Right cardiac atrium (tissue), 5 donors: ENCODE measurements at regions of chr15 and their contacts with region 1.

Region 1: GRCh38 chr15:49046220-49047102 is at the start of gene SECISBP2L:
- DNase-seq: peak; percentile 94 to 97 (median 97)
- ATAC-seq: peak; percentile 99
- H3K4me3 ChIP-seq: peak within 1 kb of the TSS; percentile 77
- H3K27ac ChIP-seq: peak within 1 kb of the TSS; percentile 61
- H3K4me1 ChIP-seq: peaks cover 2% of the 10 kb centered on the region
- H3K27me3 ChIP-seq: no peaks in the 10 kb centered on the region
- total RNA-seq, gene SECISBP2L: 31.7 to 36.9 (median 34.4) TPM

Region 2: DNA sequence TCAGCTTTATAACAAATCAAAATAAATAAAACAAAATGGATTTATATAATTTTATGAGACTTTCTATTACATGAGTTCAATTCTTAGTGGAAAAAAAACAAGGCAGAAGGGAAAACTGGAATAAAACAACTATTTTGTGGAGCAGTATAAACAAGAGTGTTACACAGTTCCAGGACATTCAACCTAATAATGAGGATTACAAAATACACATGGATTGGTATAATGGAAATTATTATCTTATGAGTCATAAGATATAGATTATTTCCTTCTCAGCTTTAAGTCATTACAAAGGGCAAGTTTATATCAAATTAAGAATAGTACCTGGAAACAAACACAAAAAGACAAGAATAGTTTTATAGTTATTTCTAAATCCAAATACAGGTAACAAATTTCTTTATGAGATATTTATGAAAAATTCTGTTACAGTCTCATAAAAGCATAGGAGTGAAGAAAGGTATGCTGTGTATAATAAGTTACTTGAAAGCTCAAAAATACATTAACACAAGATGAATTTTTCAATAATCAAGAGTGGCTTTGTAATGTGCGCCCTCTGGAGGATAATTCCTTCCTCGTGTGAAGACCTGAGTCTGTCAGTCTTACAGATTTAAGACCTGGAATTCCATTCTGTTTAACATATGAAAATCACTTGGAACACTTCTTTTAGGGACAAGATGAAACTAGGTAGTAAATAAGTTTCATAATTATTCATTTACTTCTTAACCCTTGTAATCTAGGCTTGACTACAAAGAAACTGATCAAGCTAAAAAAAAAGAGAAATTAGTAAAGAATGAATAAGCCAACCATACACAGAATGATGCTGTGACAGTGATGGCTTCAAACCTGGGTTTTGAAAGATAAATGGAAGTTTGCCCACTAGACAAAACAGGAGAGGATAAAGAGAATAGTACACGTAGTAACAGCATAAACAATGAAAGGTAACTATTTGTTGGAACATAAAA is 99.5 kb after region 1 on chr15:
- intact Hi-C with region 1: loop called in 2 of 4 experiments (anchors 10 kb)
- DNase-seq: no peak
- ATAC-seq: no peak
- H3K4me3 ChIP-seq: no peak overlapping the region
- H3K27ac ChIP-seq: no peak overlapping the region
- H3K4me1 ChIP-seq: peaks cover 3% of the 10 kb centered on the region
- H3K27me3 ChIP-seq: no peaks in the 10 kb centered on the region

Region 3: DNA sequence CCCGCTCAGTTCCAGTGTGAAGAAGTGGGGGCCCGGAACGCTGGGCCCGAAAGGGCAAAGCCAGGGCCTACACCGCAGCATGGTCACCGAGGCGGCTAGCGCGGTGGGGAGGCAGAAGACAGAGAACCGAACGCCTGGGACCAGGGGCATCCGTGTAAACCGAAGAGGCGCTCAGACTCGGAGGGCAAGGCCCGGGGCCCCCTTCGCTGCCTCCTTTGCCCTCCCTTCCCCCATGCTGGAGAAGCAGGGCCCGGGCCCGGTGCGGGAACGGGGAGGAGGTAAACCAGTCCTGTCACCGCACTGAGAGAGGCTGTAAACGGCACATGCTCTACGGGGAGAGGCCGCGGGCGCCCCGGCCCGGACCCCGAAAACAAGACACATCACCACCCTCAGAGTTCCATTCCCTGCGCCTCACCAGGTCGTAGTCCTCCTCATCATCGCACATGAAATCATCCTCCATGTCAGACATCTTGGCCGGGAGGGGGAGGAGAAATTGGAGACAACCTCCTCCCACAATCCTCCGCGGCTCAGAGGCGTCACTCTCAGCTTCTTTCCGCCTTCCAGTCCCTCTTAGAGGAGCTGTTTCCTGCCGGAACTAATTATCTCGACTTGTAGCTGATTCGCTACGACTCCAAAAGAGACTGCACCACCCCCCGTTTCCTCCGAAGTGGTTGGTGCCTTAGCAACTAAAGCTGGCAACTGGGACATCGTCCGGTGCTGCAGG is 108.8 kb after region 1 on chr15 and contains the start of gene COPS2:
- intact Hi-C with region 1: loop called in 1 of 4 experiments (anchors 10 kb)
- DNase-seq: peak; percentile 90 to 95 (median 94)
- ATAC-seq: peak; percentile 99
- H3K4me3 ChIP-seq: peak within 1 kb of the TSS; percentile 72
- H3K27ac ChIP-seq: peak within 1 kb of the TSS; percentile 78
- H3K4me1 ChIP-seq: no peaks in the 10 kb centered on the region
- H3K27me3 ChIP-seq: no peaks in the 10 kb centered on the region
- total RNA-seq, gene COPS2: 64.3 to 78.2 (median 70.8) TPM